Sigmoid colon (tissue), 7 donors: ENCODE measurements at regions of chr1 and their contacts with region 1.

Region 1: DNA sequence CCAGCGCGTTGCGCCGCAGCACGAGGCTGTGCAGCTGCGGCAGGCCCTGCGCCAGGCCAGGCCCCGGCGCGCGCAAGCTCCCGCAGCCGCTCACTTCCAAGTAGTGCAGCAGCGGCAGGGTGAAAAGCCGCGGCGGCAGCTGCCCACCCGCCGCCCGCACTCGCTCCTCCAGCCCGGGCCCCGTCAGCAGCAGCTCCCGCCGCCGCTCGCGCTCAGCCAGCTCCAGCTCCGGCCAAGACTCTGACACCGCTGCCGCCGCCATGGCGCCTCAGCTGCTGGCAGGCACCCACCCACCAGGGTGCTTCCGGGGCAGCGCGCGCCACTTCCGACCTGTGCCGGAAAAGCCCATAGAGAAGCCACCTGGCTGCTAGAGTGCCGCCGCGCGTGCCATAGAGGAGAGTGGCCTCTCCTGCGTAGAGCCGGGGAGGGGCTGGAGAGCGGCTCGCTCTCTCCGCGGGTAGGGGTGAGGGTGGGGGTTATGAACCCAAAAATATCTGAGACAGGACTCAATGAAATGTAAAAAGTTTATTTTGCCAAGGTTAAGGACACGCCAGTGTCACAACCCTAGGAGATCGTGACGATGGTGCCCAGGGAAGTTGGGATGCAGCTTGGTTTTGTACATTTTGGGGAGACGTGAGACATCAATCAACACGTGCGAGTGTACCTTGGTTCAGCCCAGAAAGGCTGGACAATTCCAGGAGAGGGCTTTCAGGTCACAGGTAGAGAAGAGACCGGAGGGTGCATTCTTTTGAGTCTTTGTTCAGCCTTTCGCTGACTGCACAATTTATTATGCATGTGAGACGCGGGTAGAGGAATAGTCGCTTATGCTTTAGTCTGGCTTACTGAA is at the start of gene LRRC47:
- DNase-seq: peak; percentile 97
- H3K4me3 ChIP-seq: peak within 1 kb of the TSS; percentile 75 to 97 (median 88)
- H3K27ac ChIP-seq: peak within 1 kb of the TSS; percentile 70 to 85 (median 78)
- H3K4me1 ChIP-seq: peaks cover 0 to 39% (median 36%) of the 10 kb centered on the region in 4 donors
- H3K27me3 ChIP-seq: no peaks in the 10 kb centered on the region
- CTCF ChIP-seq: no peak
- EP300 ChIP-seq: peak in 1 of 4 donors; percentile 29
- POLR2A ChIP-seq: peak; percentile 35 to 57
- total RNA-seq, gene LRRC47: 26.7 to 36.4 (median 31.2) TPM

Region 2: DNA sequence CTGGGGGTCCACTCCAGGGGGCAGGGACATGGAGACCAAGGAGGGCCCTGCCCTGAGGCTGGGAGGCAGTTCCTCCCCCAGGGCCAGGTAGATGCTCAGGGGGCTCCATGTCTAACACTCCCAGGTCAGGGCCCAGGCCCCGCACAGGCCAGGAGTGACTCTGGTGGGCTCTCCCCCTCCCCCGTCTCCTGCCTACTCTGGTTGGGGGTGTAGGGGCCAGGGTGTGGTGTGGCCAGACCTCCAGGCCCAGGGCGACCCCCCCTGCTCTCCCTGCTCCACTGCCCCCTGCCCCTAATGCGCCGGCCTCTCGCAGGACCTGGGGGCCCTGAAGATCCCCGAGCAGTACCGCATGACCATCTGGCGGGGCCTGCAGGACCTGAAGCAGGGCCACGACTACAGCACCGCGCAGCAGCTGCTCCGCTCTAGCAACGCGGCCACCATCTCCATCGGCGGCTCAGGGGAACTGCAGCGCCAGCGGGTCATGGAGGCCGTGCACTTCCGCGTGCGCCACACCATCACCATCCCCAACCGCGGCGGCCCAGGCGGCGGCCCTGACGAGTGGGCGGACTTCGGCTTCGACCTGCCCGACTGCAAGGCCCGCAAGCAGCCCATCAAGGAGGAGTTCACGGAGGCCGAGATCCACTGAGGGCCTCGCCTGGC is 63.9 kb before region 1 on chr1:
- intact Hi-C with region 1: no loop called
- DNase-seq: no peak
- H3K4me3 ChIP-seq: no peak overlapping the region
- H3K27ac ChIP-seq: no peak overlapping the region
- H3K4me1 ChIP-seq: peaks cover 0 to 8% (median 1%) of the 10 kb centered on the region in 4 donors
- H3K27me3 ChIP-seq: peaks cover 7 to 54% (median 28%) of the 10 kb centered on the region in 3 donors
- CTCF ChIP-seq: no peak
- EP300 ChIP-seq: no peak
- POLR2A ChIP-seq: no peak

Region 3: GRCh38 chr1:3772027-3772714 is 24.3 kb before region 1 on chr1:
- intact Hi-C with region 1: loop called (anchors 2 kb)
- DNase-seq: peak; percentile 97
- H3K4me3 ChIP-seq: peak overlapping the region; percentile 47 to 86 (median 68)
- H3K27ac ChIP-seq: peak overlapping the region; percentile 68 to 89 (median 84)
- H3K4me1 ChIP-seq: peaks cover 0 to 39% (median 32%) of the 10 kb centered on the region in 4 donors
- H3K27me3 ChIP-seq: no peaks in the 10 kb centered on the region
- CTCF ChIP-seq: no peak
- EP300 ChIP-seq: no peak
- POLR2A ChIP-seq: no peak

Region 4: GRCh38 chr1:4330805-4331766 is 534.6 kb after region 1 on chr1:
- intact Hi-C with region 1: no loop called
- DNase-seq: no peak
- H3K4me3 ChIP-seq: no peak overlapping the region
- H3K27ac ChIP-seq: no peak overlapping the region
- H3K4me1 ChIP-seq: no peaks in the 10 kb centered on the region
- H3K27me3 ChIP-seq: peaks cover 0 to 17% (median 0%) of the 10 kb centered on the region in 3 donors
- CTCF ChIP-seq: no peak
- EP300 ChIP-seq: no peak
- POLR2A ChIP-seq: no peak